ENCODE measurements at regions of chr21 and their contacts with region 1.

Region 1: DNA sequence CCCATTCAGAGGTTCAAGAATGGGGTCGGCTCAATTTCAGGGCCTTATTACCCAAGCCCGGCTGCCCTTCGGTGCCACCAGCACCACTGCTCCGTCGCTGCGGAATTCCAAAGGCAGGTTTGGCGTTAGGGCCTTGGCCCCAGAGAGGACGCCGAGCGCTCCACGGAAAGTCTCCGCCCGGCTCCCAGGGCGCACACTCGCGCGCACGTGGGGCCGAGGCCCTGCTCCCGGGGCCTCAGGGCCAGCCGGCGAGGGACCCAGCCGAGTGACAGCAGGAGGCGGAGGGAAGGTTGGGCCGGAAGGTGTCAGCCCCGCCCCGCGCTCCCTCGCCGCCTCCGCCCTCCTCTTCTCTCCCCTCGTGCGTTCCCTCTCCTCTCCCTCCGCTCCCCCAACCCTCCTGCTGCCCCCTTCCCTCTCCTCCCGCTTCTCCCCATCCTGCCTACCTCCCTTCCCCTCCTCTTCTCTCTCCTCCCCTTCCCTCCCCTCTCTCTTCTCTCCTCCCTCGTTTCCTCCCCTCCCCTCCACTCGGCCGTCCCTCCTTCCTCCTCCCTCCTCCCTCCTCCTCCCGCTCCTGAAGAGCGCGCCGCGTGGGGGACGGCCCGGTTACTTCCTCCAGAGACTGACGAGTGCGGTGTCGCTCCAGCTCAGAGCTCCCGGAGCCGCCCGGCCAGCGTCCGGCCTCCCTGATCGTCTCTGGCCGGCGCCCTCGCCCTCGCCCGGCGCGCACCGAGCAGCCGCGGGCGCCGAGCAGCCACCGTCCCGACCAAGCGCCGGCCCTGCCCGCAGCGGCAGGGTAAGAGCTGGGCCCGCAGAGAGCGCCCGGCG is at the start of gene ETS2:
- DNase-seq: peak; percentile 65 to 94
- H3K4me3 ChIP-seq: peak within 1 kb of the TSS; percentile 91 to 100
- H3K27ac ChIP-seq: peak within 1 kb of the TSS; percentile 99
- H3K4me1 ChIP-seq: peaks cover 11 to 22% of the 10 kb centered on the region in 2 donors
- H3K27me3 ChIP-seq: no peaks in the 10 kb centered on the region
- CTCF ChIP-seq: no peak
- total RNA-seq, gene ETS2: 113 TPM

Region 2: GRCh38 chr21:38645282-38645681 is 160.3 kb before region 1 on chr21:
- intact Hi-C with region 1: loop called (anchors 1 kb)
- DNase-seq: no peak
- H3K4me3 ChIP-seq: no peak overlapping the region
- H3K27ac ChIP-seq: peak overlapping the region; percentile 68 to 71
- H3K4me1 ChIP-seq: peaks cover 2 to 53% of the 10 kb centered on the region in 2 donors
- H3K27me3 ChIP-seq: no peaks in the 10 kb centered on the region
- CTCF ChIP-seq: no peak

Region 3: DNA sequence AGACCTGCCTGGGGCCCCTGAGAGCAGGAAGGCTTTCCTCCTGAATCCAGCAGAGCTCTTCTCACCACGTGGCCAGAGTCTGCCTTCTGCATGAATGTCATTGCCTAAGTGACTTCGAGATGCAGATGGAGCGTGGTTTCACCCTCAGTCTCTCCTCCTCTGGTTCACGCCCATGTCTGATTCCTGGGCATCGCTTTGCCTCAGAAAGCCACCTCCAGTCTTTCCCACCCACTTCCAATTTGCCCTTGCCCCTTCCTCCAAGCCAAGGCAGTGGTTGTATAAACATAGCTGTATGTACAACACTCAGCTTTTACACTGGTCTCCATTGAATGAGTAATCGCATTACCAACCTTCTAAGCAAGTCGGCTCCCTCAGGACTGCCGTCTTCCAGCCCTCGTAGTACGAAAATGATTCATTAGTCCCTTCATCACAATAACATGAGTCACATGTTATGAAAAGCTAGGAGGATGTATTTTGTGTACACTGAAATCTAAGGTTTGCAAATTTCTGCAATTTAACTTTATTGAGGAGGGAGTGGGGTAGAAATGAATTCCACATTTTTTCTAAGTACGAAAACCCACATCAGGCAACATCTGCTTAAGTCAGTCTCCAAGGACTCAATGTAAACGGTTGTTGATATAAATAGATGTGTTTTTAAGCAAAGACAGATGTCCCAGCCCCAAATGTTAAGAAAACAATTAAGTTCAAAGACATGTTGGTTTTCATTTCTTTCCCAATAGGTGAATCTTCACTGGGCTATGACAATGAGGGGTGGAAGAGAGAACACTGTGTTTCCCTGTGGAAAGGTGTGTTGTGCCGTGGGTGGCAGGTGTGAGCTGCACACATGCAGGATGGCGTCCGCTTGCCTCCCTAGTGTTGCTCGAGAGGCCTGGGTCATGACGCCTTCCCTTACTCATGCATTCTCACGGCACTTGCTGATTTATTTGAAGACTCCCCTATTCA is 32.2 kb before region 1 on chr21:
- intact Hi-C with region 1: loop called (anchors 1 kb)
- DNase-seq: peak; percentile 43 to 92
- H3K4me3 ChIP-seq: no peak overlapping the region
- H3K27ac ChIP-seq: peak overlapping the region; percentile 37 to 75
- H3K4me1 ChIP-seq: peaks cover 4 to 18% of the 10 kb centered on the region in 2 donors
- H3K27me3 ChIP-seq: no peaks in the 10 kb centered on the region
- CTCF ChIP-seq: no peak

Region 4: DNA sequence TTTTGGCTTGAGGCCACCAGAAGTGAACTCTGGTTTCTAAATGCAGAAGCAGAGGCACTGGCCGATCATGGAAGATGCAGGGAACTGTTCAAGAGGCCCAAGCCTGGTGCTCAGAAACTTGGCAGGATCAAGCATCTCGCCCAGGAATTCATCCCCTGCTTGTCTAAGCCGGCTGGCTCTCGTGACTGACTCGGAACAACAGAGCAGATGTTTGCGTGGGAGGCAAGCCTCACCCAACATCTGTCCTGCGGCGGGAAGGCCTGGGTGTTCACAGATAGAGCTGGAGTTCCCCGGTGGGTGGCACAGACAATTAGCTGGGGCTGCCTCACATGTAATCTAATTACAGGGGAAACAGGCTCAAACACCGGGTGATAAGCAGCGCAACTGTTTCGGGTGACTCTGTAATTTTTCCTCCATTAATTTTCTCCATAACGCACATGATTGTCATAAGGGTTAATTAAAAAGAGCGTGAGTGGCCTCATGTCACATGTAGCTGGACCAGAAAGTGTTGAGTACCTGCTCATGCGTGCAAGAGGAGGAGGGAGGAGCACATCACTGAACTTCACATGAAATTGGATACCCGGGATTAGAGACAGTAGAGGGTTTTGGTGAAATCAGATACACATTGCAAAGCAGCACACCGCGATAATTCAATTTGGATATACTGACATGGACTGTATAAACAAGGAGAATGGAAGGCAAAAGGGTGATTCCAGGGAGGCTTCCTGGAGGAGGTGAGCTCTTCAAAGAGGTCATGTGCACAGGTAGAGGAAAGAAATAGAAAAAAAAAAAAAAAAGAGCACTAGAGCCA is 180.2 kb after region 1 on chr21:
- intact Hi-C with region 1: loop called (anchors 5 kb)
- DNase-seq: peak; percentile 39 to 88
- H3K4me3 ChIP-seq: peak overlapping the region in 1 of 2 donors; percentile 20
- H3K27ac ChIP-seq: peak overlapping the region; percentile 70 to 76
- H3K4me1 ChIP-seq: peaks cover 25 to 55% of the 10 kb centered on the region in 2 donors
- H3K27me3 ChIP-seq: no peaks in the 10 kb centered on the region
- CTCF ChIP-seq: no peak

Region 5: DNA sequence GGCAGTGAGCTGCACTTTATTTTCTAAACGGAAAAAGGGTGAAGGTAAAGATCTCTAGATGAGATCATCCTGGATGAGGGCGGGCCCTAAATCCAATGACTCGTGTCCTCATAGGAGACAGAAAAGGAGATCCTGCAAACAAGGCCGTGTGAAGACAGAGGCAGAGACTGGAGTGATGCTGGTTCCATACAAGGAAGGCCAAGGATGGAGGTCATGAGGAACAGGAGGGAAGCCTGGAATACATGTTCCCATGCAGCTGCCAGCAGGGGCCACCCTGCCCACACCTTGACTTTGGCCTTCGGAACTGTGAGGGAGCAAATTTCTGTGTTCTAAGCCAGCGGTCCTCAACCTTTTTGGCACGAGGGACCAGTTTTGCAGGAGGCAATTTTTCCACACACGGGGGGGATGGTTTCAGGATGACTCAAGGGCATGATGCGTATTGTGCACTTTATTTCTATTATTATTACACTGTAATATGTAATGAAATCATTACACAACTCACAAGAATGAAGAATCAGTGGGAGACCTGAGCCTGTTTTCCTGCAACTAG is 283.4 kb after region 1 on chr21:
- intact Hi-C with region 1: loop called (anchors 2 kb)
- DNase-seq: peak; percentile 71 to 94
- H3K4me3 ChIP-seq: no peak overlapping the region
- H3K27ac ChIP-seq: peak overlapping the region; percentile 94 to 97
- H3K4me1 ChIP-seq: peaks cover 12 to 33% of the 10 kb centered on the region in 2 donors
- H3K27me3 ChIP-seq: no peaks in the 10 kb centered on the region
- CTCF ChIP-seq: peak in 2 of 3 experiments; percentile 26 to 38

Measured in ascending aorta (tissue), 2 donors.